Activated CD4-positive, alpha-beta T cell treated with anti-CD3 and anti-CD28 coated beads for 36 hours (primary cell): ENCODE measurements at regions of chr2 and their contacts with region 1.

Region 1: GRCh38 chr2:134301099-134301927 is 47.4 kb downstream of the MGAT5 start:
- DNase-seq: no peak
- ATAC-seq: peak; percentile 88
- H3K4me3 Mint-ChIP-seq: peak overlapping the region; percentile 8
- H3K27ac Mint-ChIP-seq: peak overlapping the region; percentile 51
- H3K4me1 Mint-ChIP-seq: peaks cover 59% of the 10 kb centered on the region
- H3K27me3 Mint-ChIP-seq: no peaks in the 10 kb centered on the region

Region 2: DNA sequence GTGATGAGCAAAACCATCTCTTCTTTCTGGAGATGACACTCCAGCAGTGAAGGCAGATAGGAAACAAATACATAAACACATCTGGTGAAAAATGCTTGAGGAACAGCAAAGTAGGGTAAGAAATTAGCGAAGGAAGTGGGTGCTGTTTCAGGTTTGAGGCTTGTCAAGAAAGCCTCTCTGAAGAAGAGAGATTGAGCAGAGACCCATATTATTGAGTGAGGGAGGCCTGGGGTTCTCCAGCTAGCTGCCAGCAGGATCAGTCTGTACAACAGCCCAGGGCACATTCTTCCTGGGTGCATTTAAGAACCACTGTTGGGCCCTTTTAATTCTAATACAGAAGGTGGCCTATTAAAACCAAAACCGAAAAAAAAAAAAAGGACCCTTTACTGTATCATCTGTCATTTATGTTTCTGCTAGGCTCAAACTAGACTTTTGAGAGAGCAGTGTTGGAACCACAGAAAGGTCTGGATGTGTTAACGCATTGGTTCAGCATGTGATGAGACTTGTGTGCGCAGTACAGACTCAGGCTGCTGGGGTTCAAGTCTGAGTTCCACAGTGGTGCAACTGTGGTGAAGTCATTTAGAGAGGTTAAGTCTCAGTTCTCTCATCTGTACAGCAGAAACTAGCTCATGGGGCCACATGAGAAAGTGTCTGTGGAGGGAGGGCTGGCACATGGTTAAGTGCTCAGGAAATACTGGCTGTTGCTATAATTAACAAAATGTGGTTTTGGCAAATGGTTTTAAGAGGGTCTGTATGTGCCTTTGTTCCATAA is 18.5 kb before region 1 on chr2:
- CTCF ChIA-PET with region 1: interaction called, 7 read pairs
- POLR2A ChIA-PET with region 1: no interaction called
- intact Hi-C with region 1: loop called in 1 of 2 experiments (anchors 2 kb)
- DNase-seq: peak; percentile 70
- ATAC-seq: peak; percentile 91
- H3K4me3 Mint-ChIP-seq: no peak overlapping the region
- H3K27ac Mint-ChIP-seq: peak overlapping the region; percentile 66
- H3K4me1 Mint-ChIP-seq: peaks cover 51% of the 10 kb centered on the region
- H3K27me3 Mint-ChIP-seq: no peaks in the 10 kb centered on the region

Region 3: DNA sequence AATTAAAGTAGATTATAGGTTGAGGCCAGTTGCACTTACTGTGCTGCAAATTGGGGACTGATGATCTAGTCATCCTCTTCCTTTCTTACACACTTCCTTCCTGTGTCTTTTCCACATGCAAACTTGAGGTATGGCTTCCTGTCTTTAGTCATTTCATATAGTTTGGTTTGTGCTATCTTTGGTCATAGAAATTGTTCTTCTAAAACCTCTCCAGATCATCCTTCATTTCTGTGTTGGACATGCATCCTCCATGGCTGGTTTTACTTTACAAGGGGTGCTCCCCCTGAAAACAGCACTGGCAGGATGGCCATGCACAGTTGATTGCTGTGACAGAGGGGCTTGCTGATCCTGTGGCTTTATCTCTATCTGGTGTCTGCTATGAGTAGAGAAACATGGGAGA is 11.0 kb before region 1 on chr2:
- CTCF ChIA-PET with region 1: interaction called, 3 read pairs
- POLR2A ChIA-PET with region 1: no interaction called
- intact Hi-C with region 1: loop called (anchors 1 kb)
- DNase-seq: peak; percentile 22
- ATAC-seq: peak; percentile 66
- H3K4me3 Mint-ChIP-seq: no peak overlapping the region
- H3K27ac Mint-ChIP-seq: no peak overlapping the region
- H3K4me1 Mint-ChIP-seq: peaks cover 7% of the 10 kb centered on the region
- H3K27me3 Mint-ChIP-seq: no peaks in the 10 kb centered on the region